Body of pancreas (tissue), 4 donors: ENCODE measurements at regions of chr1 and their contacts with region 1.

Region 1: DNA sequence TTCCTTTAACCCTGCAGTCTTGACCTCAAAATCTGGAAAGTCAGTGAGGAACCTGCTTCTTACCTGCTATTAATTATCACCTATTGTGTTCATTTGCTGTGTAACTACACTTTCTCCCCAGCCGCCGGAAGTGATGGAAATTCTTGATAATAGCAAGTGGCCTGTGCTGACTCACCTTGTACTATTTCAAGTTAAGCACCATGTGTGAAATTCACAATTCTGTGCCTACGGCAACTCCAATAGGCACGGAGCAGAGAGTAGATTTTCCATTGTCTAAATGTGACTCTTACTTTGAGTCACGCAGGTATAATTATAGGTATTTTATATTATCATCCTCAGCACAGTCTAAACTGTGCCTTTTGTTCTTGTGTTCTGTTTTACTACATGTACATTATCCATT is 466.8 kb downstream of the KIF26B start:
- DNase-seq: no peak
- ATAC-seq: no peak
- H3K4me3 ChIP-seq: no peak overlapping the region
- H3K27ac ChIP-seq: no peak overlapping the region
- H3K4me1 ChIP-seq: no peaks in the 10 kb centered on the region
- H3K27me3 ChIP-seq: no peaks in the 10 kb centered on the region
- CTCF ChIP-seq: no peak
- POLR2A ChIP-seq: no peak

Region 2: GRCh38 chr1:244815600-244816099 is 805.9 kb before region 1 on chr1:
- intact Hi-C with region 1: no loop called
- DNase-seq: peak in 1 of 4 donors; percentile 34
- ATAC-seq: no peak
- H3K4me3 ChIP-seq: no peak overlapping the region
- H3K27ac ChIP-seq: no peak overlapping the region
- H3K4me1 ChIP-seq: no peaks in the 10 kb centered on the region
- H3K27me3 ChIP-seq: no peaks in the 10 kb centered on the region
- CTCF ChIP-seq: no peak
- POLR2A ChIP-seq: no peak

Region 3: GRCh38 chr1:245441689-245442088 is 179.9 kb before region 1 on chr1:
- intact Hi-C with region 1: loop called (anchors 5 kb)
- DNase-seq: peak in 1 of 4 donors; percentile 16
- ATAC-seq: no peak
- H3K4me3 ChIP-seq: no peak overlapping the region
- H3K27ac ChIP-seq: no peak overlapping the region
- H3K4me1 ChIP-seq: no peaks in the 10 kb centered on the region
- H3K27me3 ChIP-seq: no peaks in the 10 kb centered on the region
- CTCF ChIP-seq: no peak
- POLR2A ChIP-seq: no peak

Region 4: DNA sequence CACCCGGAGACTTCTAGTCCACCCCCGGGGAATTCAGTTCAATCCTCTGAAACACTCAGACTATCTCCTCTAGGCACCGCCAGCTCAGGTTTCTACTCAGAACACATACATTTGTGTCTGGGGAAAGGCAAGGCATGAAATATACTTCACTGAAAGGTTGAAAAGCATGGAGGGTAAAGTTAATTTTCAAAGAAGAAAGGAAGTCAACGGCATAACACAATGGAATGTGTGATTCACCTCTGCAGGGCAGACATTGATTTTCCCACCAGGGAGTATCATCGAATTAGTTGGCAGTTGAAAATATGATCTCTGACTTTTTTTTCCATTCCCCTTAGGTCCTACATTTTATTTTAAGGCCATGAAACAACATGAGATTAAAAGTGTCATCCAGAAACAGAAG is 216.1 kb after region 1 on chr1:
- intact Hi-C with region 1: no loop called
- DNase-seq: no peak
- ATAC-seq: no peak
- H3K4me3 ChIP-seq: no peak overlapping the region
- H3K27ac ChIP-seq: no peak overlapping the region
- H3K4me1 ChIP-seq: no peaks in the 10 kb centered on the region
- H3K27me3 ChIP-seq: no peaks in the 10 kb centered on the region
- CTCF ChIP-seq: no peak
- POLR2A ChIP-seq: no peak